ENCODE measurements at regions of chr6 and their contacts with region 1.

Region 1: GRCh38 chr6:28349892-28350737 is at the start of gene ZKSCAN3:
- DNase-seq: peak; percentile 46
- ATAC-seq: peak; percentile 100
- H3K4me3 ChIP-seq: peak within 1 kb of the TSS; percentile 93
- H3K27ac ChIP-seq: peak within 1 kb of the TSS; percentile 61
- H3K4me1 ChIP-seq: no peaks in the 10 kb centered on the region
- H3K27me3 ChIP-seq: no peaks in the 10 kb centered on the region
- CTCF ChIP-seq: no peak
- EP300 ChIP-seq: no peak
- POLR2A ChIP-seq: peak; percentile 80
- RAD21 ChIP-seq: peak; percentile 33; the same call in 1 of the 2 replicates
- polyA plus RNA-seq, gene ZKSCAN3: 0.86 to 1.1 TPM

Region 2: GRCh38 chr6:28225056-28225834 is 124.9 kb before region 1 on chr6 and contains the start of gene ZSCAN9:
- CTCF ChIA-PET with region 1: interaction called, 9 read pairs
- POLR2A ChIA-PET with region 1: no interaction called
- RAD21 ChIA-PET with region 1: no interaction called
- SMC1A ChIA-PET with region 1: interaction called, 3 read pairs
- in situ Hi-C with region 1: no loop called
- intact Hi-C with region 1: loop called (anchors 5 kb)
- DNase-seq: peak; percentile 44
- ATAC-seq: peak; percentile 98
- H3K4me3 ChIP-seq: peak within 1 kb of the TSS; percentile 89
- H3K27ac ChIP-seq: peak within 1 kb of the TSS; percentile 73
- H3K4me1 ChIP-seq: no peaks in the 10 kb centered on the region
- H3K27me3 ChIP-seq: no peaks in the 10 kb centered on the region
- CTCF ChIP-seq: no peak
- EP300 ChIP-seq: peak; percentile 15 to 35; a peak in 1 of 4 replicates
- POLR2A ChIP-seq: peak; percentile 95
- RAD21 ChIP-seq: no peak
- polyA plus RNA-seq, gene ZSCAN9: 10.2 to 12.4 TPM

Region 3: GRCh38 chr6:28252009-28252975 is 97.8 kb before region 1 on chr6 and contains the start of gene ZKSCAN4:
- CTCF ChIA-PET with region 1: interaction called, 10 read pairs
- POLR2A ChIA-PET with region 1: no interaction called
- RAD21 ChIA-PET with region 1: no interaction called
- SMC1A ChIA-PET with region 1: interaction called, 9 read pairs
- in situ Hi-C with region 1: no loop called
- intact Hi-C with region 1: loop called (anchors 1 kb)
- DNase-seq: peak; percentile 67
- ATAC-seq: peak; percentile 93
- H3K4me3 ChIP-seq: peak within 1 kb of the TSS; percentile 99
- H3K27ac ChIP-seq: peak within 1 kb of the TSS; percentile 55
- H3K4me1 ChIP-seq: no peaks in the 10 kb centered on the region
- H3K27me3 ChIP-seq: no peaks in the 10 kb centered on the region
- CTCF ChIP-seq: no peak
- EP300 ChIP-seq: no peak
- POLR2A ChIP-seq: peak; percentile 52
- RAD21 ChIP-seq: peak; percentile 35
- polyA plus RNA-seq, gene ZKSCAN4: 3.0 to 3.3 TPM

Region 4: GRCh38 chr6:28281288-28282064 is 68.6 kb before region 1 on chr6 and contains the start of gene PGBD1:
- CTCF ChIA-PET with region 1: no interaction called
- POLR2A ChIA-PET with region 1: no interaction called
- RAD21 ChIA-PET with region 1: interaction called, 14 read pairs
- SMC1A ChIA-PET with region 1: interaction called, 7 read pairs
- in situ Hi-C with region 1: no loop called
- intact Hi-C with region 1: loop called (anchors 5 kb)
- DNase-seq: no peak
- ATAC-seq: peak; percentile 97
- H3K4me3 ChIP-seq: peak within 1 kb of the TSS; percentile 71
- H3K27ac ChIP-seq: no peak within 1 kb of the TSS; the same call in 1 of the 2 replicates
- H3K4me1 ChIP-seq: no peaks in the 10 kb centered on the region
- H3K27me3 ChIP-seq: no peaks in the 10 kb centered on the region
- CTCF ChIP-seq: no peak
- EP300 ChIP-seq: no peak
- POLR2A ChIP-seq: peak; percentile 72
- RAD21 ChIP-seq: 0 out of 2 replicates have a peak, but pooled peaks have one; percentile 2
- polyA plus RNA-seq, gene PGBD1: 2.0 to 2.2 TPM

Region 5: GRCh38 chr6:28383235-28384142 is 33.4 kb after region 1 on chr6:
- CTCF ChIA-PET with region 1: interaction called, 18 read pairs
- POLR2A ChIA-PET with region 1: interaction called, 3 read pairs
- RAD21 ChIA-PET with region 1: interaction called, 6 read pairs
- SMC1A ChIA-PET with region 1: interaction called, 11 read pairs
- in situ Hi-C with region 1: no loop called
- intact Hi-C with region 1: no loop called
- DNase-seq: no peak
- ATAC-seq: peak; percentile 97
- H3K4me3 ChIP-seq: peak overlapping the region; percentile 38; the same call in 1 of the 2 replicates
- H3K27ac ChIP-seq: peak overlapping the region; percentile 50; the same call in 1 of the 2 replicates
- H3K4me1 ChIP-seq: no peaks in the 10 kb centered on the region
- H3K27me3 ChIP-seq: no peaks in the 10 kb centered on the region
- CTCF ChIP-seq: peak; percentile 41 to 47 (median 42); a peak in 5 of 6 replicates
- EP300 ChIP-seq: peak; percentile 72 to 74; a peak in 2 of 4 replicates
- POLR2A ChIP-seq: peak; percentile 66
- RAD21 ChIP-seq: peak; percentile 49

Measured in GM12878 (cell line).